ENCODE measurements at regions of chr6 and their contacts with region 1.

Region 1: GRCh38 chr6:54267798-54268197 is 40.4 kb upstream of the TINAG start:
- DNase-seq: peak; percentile 57
- H3K4me3 Mint-ChIP-seq: no peak overlapping the region
- H3K27ac Mint-ChIP-seq: no peak overlapping the region
- H3K4me1 Mint-ChIP-seq: peaks cover 8% of the 10 kb centered on the region
- H3K27me3 Mint-ChIP-seq: no peaks in the 10 kb centered on the region
- CTCF ChIP-seq: peak; percentile 46

Region 2: GRCh38 chr6:54307439-54307910 is 39.7 kb after region 1 on chr6:
- CTCF ChIA-PET with region 1: no interaction called
- intact Hi-C with region 1: loop called (anchors 2 kb)
- DNase-seq: peak; percentile 70
- H3K4me3 Mint-ChIP-seq: no peak overlapping the region
- H3K27ac Mint-ChIP-seq: no peak overlapping the region
- H3K4me1 Mint-ChIP-seq: peaks cover 17% of the 10 kb centered on the region
- H3K27me3 Mint-ChIP-seq: no peaks in the 10 kb centered on the region
- CTCF ChIP-seq: no peak

Measured in Calu3 (cell line).